ENCODE measurements at regions of chr2 and their contacts with region 1.

Region 1: DNA sequence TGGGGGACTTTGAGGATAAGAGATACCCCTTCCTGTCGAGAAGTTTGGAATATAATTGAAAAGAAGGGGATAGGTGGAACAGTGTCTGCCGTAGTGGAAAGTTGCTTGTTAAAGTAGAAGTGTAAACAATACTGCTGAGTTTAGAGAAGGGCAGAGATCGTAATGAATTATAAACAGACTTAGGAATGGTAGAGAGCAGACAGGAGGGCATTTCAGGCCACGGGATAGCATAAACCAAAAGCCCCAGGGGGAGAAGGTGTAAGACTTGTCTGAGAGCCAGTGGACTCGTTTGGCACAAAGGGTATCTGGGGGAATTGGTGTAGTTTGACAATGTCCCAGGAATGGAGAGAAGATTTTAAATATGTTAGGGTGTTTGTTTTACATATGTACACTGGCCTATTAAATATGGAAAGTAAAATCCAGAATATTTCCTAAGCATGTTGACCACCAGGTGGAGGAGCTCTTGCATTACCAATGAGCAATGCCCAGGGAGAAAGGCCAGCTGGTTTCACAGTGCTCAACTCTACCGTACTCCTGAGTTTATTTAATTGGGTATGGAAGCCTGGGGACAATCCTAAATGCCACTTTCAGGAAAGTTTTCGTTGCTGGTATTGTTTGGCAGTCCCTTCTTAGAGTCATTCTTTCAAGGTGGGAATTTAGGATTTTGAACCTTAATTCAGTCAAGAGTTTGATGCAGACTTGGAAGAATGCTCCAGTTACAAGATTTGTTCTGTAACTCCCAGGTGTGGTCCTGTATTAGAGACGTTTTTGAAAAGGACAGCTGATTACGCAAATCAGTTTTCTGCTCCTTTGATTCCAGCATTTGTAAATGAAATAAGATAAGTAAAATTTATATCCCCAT is 7.5 kb downstream of the COPS8 start:
- DNase-seq: peak; percentile 80 to 83
- ATAC-seq: peak; percentile 61 to 64
- H3K4me3 ChIP-seq: peak overlapping the region in 2 of 4 donors; percentile 9 to 34
- H3K27ac ChIP-seq: peak overlapping the region; percentile 93 to 95 (median 94)
- H3K4me1 ChIP-seq: peaks cover 89 to 94% of the 10 kb centered on the region in 2 donors
- H3K27me3 ChIP-seq: no peaks in the 10 kb centered on the region
- CTCF ChIP-seq: peak; percentile 66 to 83 (median 77)
- POLR2A ChIP-seq: no peak

Region 2: GRCh38 chr2:237132799-237133198 is 39.6 kb after region 1 on chr2:
- in situ Hi-C with region 1: no loop called
- intact Hi-C with region 1: loop called (anchors 2 kb)
- DNase-seq: no peak
- ATAC-seq: no peak
- H3K4me3 ChIP-seq: no peak overlapping the region
- H3K27ac ChIP-seq: peak overlapping the region in 2 of 4 donors; percentile 36 to 42
- H3K4me1 ChIP-seq: peaks cover 3 to 12% of the 10 kb centered on the region in 2 donors
- H3K27me3 ChIP-seq: no peaks in the 10 kb centered on the region
- CTCF ChIP-seq: peak in 3 of 5 experiments; percentile 8 to 48 (median 46)
- POLR2A ChIP-seq: no peak

Region 3: DNA sequence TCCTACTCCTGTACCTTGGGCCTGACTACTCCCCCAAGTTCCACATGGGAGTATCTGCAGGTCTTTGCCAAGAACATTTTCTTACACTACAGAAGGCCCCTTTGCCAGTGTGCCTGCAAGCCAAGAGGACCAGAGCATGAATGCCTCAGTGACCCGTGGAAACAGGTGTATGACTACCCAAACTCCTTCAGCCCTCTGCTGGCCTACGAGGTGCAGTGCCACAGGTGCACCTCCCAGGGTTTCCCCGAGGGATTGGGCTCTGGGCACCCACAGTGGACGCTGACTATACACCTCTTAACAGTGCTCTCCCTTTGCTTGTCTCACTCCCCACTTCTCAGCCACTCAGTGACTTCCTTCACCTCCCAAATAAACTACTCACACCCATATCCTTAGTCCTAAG is 229.4 kb after region 1 on chr2:
- in situ Hi-C with region 1: no loop called
- intact Hi-C with region 1: loop called (anchors 2 kb)
- DNase-seq: no peak
- ATAC-seq: peak in 1 of 2 donors; percentile 42
- H3K4me3 ChIP-seq: no peak overlapping the region
- H3K27ac ChIP-seq: peak overlapping the region; percentile 48 to 72 (median 60)
- H3K4me1 ChIP-seq: peaks cover 12 to 31% of the 10 kb centered on the region in 2 donors
- H3K27me3 ChIP-seq: no peaks in the 10 kb centered on the region
- CTCF ChIP-seq: peak; percentile 12 to 57 (median 45)
- POLR2A ChIP-seq: no peak

Region 4: GRCh38 chr2:237449193-237449881 is 356.2 kb after region 1 on chr2:
- in situ Hi-C with region 1: no loop called
- intact Hi-C with region 1: loop called (anchors 1 kb)
- DNase-seq: peak; percentile 94 to 96
- ATAC-seq: peak; percentile 98 to 99
- H3K4me3 ChIP-seq: peak overlapping the region; percentile 12 to 52 (median 46)
- H3K27ac ChIP-seq: peak overlapping the region; percentile 90 to 99 (median 94)
- H3K4me1 ChIP-seq: peaks cover 30 to 43% of the 10 kb centered on the region in 2 donors
- H3K27me3 ChIP-seq: no peaks in the 10 kb centered on the region
- CTCF ChIP-seq: no peak
- POLR2A ChIP-seq: peak in 1 of 2 donors; percentile 76

Region 5: DNA sequence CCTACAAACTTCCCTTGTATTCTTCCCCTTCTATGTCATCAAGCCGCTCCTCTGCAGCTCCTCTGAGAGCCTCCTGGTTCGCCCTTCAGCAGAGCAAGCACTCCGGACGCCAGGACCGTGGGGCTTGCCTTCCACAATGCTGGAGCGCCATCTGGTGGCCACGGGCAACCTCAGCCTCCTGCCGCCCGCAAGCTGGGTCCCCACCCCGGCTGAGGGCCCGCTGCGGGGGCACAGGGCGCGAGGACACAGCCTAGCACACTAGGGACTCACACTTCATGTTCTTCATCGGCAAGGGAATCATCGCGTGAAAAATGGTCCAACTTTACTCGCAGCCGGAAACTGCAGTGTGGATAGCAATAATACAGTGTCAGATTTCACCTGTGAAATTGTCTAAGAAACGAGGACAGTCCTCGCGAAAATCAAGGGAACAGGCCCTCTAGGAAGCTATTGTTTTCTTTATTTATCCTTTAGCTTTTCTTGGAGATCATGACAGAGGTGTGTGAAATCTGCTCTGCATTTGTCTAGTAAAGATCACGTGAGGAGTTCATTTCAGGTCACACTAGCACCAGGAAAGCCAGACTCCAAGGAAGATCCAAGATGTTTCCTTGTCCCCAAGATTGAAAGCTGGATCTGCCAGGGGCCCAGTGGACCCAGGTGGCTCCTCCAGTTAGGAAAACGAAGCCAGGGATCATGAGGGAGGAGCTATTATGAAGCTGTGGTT is 479.0 kb after region 1 on chr2:
- in situ Hi-C with region 1: no loop called
- intact Hi-C with region 1: loop called (anchors 5 kb)
- DNase-seq: peak; percentile 83 to 85
- ATAC-seq: peak; percentile 91 to 95
- H3K4me3 ChIP-seq: peak overlapping the region; percentile 15 to 45 (median 38)
- H3K27ac ChIP-seq: peak overlapping the region; percentile 36 to 69 (median 47)
- H3K4me1 ChIP-seq: peaks cover 13% of the 10 kb centered on the region in 2 donors
- H3K27me3 ChIP-seq: no peaks in the 10 kb centered on the region
- CTCF ChIP-seq: peak; percentile 99
- POLR2A ChIP-seq: no peak

Measured in gastrocnemius medialis (tissue), 4 donors.